ENCODE measurements at regions of chr6 and their contacts with region 1.

Region 1: DNA sequence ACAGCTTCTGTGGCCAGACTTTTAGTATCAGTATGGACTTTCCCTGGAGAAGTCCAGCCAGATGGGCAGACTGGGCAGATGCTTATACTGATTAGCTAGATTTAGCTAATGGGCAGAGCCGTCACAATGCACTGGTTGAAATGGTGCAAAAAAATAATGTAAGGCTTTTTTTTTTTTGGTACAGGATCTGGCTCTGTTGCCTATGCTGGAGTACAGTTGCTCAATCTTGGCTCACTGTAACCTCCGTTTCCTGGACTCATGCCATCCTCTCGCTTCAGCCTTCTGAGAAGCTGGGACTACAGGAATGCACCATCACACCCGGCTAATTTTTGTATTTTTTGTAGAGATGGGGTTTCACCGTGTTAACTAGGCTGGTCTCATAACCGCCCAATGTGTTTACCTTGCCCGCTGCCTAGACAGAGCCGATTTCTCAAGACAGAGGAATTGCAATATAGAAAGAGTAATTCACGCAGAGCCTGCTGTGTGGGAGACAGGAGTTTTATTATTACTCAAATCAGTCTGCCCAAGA is 16.4 kb upstream of the KIFC1 start:
- DNase-seq: peak; percentile 73
- H3K4me3 ChIP-seq: no peak overlapping the region
- H3K27ac ChIP-seq: peak overlapping the region; percentile 60
- H3K4me1 ChIP-seq: peaks cover 25% of the 10 kb centered on the region
- H3K27me3 ChIP-seq: no peaks in the 10 kb centered on the region
- CTCF ChIP-seq: no peak

Region 2: GRCh38 chr6:32666420-32667300 is 708.5 kb before region 1 on chr6 and contains the start of gene HLA-DQB1:
- CTCF ChIA-PET with region 1: no interaction called
- dilution Hi-C with region 1: no loop called
- in situ Hi-C with region 1: no loop called
- intact Hi-C with region 1: loop called (anchors 10 kb)
- DNase-seq: peak; percentile 83
- H3K4me3 ChIP-seq: no peak within 1 kb of the TSS
- H3K27ac ChIP-seq: no peak within 1 kb of the TSS
- H3K4me1 ChIP-seq: no peaks in the 10 kb centered on the region
- H3K27me3 ChIP-seq: peaks cover 6% of the 10 kb centered on the region
- CTCF ChIP-seq: no peak
- total RNA-seq, gene HLA-DQB1: 0.17 to 10.7 TPM